Left colon (tissue), 2 donors: ENCODE measurements at regions of chr11 and their contacts with region 1.

Region 1: DNA sequence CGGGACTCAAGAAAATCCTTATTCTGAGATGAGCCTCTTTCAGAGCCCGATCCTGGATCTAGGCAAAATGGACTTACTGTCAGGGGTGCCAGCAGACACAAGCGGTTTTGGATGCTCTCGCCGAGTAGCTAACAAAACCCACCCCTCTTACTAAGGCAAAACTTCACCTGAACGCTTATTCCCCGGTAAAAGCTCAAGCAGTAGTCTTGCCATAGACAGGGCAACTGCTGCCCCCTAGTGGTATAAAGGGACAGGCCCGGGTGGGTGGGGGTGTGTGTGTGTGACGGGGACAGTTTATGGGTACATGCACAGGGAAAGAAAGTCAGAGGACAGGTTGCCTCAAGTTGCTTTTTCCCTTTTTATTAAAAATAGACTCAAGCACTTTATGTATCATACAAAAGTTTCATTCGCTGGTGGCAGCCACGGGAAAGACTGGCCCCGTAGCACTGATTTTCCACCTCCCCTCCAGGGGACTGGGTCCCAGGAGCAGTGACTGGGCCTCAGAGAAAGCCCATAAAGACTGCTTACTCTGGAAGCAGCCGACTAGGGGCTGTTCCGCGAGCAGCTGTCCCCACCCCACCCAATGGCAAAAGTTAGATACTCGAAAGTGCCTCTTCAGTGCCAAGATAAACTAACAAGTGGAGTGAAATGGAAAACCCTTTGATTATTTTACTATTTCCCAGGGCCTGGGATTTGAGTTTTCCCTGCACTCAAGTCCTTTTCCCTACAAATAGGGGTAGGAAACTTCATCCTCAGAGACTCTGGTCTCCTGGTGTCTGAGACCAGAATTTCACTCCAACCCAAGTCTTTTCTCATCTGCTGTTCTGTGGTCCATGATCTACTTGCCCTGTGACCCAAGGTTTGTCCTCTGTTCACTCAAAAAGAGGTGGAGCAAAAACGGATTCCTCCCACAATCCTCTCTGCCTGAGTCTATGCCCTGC is 4.7 kb downstream of the YPEL4 start:
- DNase-seq: peak; percentile 75 to 82
- ATAC-seq: peak; percentile 87

Region 2: GRCh38 chr11:57345555-57346211 is 299.3 kb before region 1 on chr11:
- intact Hi-C with region 1: loop called in 1 of 2 experiments (anchors 10 kb)
- DNase-seq: peak; percentile 57 to 85
- ATAC-seq: peak; percentile 95

Region 3: DNA sequence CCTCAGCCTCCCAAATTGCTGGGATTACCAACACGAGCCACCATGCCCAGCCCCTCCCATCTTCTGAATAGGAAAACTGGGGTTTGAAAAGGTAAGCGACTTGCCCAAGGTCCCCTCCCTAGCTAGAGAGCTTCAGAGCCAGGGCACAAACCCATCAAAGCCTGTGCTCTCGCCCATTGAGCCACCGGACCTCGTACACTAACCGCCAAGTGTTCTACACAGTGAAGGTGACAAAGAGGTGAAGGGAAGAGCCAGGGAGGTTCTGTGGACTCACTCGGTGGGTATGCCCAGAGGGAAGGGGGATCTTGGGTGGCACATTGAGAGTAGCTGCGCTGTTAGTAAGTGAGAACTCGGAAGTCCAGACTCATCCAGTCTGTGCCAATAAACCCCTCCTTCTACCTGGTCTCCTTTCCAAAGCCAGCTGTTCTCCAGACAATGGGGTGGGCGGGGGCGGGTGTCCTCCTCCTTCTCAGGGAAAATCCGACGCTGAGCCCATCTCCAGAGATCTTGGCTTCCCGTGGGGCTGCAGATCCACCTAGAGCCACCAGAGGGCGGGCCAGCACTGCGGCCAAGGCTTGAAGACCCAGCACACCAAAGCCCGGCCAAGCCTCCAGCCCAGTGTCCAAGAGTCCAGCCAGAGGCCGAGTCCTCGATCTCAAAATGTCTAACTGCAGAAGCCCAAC is 187.9 kb before region 1 on chr11:
- intact Hi-C with region 1: loop called in 1 of 2 experiments (anchors 10 kb)
- DNase-seq: peak; percentile 76 to 88
- ATAC-seq: peak; percentile 62

Region 4: GRCh38 chr11:57571606-57572005 is 73.4 kb before region 1 on chr11:
- intact Hi-C with region 1: loop called in 1 of 2 experiments (anchors 5 kb)
- DNase-seq: no peak
- ATAC-seq: no peak

Region 5: DNA sequence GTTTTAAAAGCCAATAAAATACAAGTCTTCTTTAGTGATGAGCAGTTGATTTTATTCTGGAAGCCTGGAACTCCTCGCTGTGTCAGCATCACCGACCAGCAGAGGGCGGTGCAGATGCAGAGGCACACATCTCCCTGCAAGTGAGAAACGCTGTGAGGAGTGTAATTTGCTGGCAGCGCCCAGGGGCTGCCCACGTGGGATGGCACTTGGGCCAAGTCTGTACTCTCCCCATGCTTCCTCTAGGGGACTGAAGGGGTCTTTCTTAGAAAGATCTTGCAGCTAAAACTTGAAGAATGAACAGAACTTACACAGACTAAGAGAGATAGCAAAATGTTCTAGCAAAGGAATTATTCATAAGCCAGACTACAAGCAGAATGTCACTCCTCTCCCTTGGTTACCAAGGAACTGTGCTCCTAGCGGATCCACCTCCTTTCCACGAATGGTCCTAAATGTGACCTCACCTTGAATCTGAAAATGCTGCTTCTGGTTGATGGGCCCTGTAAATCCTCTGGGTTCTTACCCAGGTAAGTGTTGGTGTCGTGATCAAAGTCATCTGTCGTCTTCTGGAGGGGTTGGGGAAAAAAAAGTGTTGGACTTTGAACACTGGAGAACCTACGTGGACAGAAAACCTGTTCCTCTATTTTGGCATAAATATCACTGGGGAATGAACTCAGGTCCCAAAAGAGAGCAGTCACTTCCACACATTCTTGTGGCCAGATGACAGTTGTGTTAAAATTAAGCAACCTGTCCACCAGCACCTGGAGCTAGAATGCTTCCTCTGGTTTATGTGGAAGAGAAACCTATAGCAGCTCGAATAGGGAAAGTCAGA is 1009.3 kb after region 1 on chr11:
- intact Hi-C with region 1: no loop called
- DNase-seq: peak; percentile 64 to 89
- ATAC-seq: peak; percentile 98